PC-3 (cell line): ENCODE measurements at regions of chr13 and their contacts with region 1.

Region 1: DNA sequence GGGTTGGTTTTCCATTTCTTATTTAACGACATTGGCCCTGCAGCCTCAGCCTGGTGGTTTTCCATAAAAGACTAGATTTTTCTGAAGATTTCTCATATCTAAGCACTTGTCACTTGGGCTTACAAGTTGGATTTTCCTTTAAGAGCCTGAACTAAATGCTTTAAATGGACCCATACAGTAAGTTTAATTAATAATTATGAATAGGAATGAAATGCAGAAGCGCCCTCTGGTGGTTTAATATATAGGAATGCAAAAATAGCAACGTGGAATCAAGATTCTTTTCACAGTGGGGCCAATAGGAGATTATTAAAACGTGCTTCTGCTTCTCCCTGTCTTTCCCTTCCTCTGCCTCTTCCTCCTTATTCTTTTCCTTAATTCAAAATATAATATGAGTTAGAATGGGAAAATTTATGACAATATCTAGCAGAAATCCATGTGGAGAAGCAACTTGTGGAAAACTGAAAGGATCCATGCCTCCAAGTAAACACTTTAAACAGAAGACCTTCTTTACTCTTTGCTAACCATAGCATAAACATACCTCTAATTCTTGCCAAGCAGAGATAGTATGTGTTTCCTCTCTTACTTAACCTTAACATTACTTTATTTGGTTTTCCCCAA is 324.0 kb downstream of the GPC5 start:
- DNase-seq: peak; percentile 41
- ATAC-seq: no peak; the same call in 1 of the 2 replicates
- H3K4me3 ChIP-seq: no peak overlapping the region
- H3K27ac ChIP-seq: no peak overlapping the region
- H3K4me1 ChIP-seq: no peaks in the 10 kb centered on the region
- H3K27me3 ChIP-seq: no peaks in the 10 kb centered on the region
- CTCF ChIP-seq: peak; percentile 63

Region 2: GRCh38 chr13:91381371-91381770 is 341.0 kb before region 1 on chr13:
- CTCF ChIA-PET with region 1: no interaction called
- POLR2A ChIA-PET with region 1: no interaction called
- intact Hi-C with region 1: loop called (anchors 1 kb)
- DNase-seq: peak; percentile 26
- ATAC-seq: peak; percentile 31; the same call in 1 of the 2 replicates
- H3K4me3 ChIP-seq: no peak overlapping the region
- H3K27ac ChIP-seq: no peak overlapping the region
- H3K4me1 ChIP-seq: no peaks in the 10 kb centered on the region
- H3K27me3 ChIP-seq: no peaks in the 10 kb centered on the region
- CTCF ChIP-seq: peak; percentile 48; the same call in 1 of the 2 replicates

Region 3: GRCh38 chr13:91491984-91492383 is 230.4 kb before region 1 on chr13:
- CTCF ChIA-PET with region 1: no interaction called
- POLR2A ChIA-PET with region 1: no interaction called
- intact Hi-C with region 1: loop called (anchors 5 kb)
- DNase-seq: no peak
- ATAC-seq: no peak
- H3K4me3 ChIP-seq: no peak overlapping the region
- H3K27ac ChIP-seq: no peak overlapping the region
- H3K4me1 ChIP-seq: no peaks in the 10 kb centered on the region
- H3K27me3 ChIP-seq: no peaks in the 10 kb centered on the region
- CTCF ChIP-seq: no peak

Region 4: DNA sequence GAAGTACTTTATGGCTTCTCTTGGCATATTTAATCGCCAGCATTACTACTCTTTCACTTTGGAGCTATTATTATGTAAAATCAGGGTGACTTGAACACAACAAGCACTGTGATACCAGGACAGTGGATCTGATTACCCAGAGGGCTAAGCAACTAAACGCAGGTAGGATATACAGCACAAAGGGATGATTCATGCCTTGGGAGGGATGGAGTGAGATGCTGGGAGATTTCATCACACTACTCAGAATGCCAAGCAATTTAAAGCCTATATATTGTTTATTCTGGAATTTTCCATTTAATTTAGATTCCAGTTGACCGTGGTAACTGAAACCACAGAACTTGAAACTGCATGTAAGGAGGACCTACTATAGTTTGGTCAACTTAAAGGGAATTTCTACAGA is 70.0 kb before region 1 on chr13:
- CTCF ChIA-PET with region 1: no interaction called
- POLR2A ChIA-PET with region 1: no interaction called
- intact Hi-C with region 1: no loop called
- DNase-seq: no peak
- ATAC-seq: no peak
- H3K4me3 ChIP-seq: no peak overlapping the region
- H3K27ac ChIP-seq: no peak overlapping the region
- H3K4me1 ChIP-seq: no peaks in the 10 kb centered on the region
- H3K27me3 ChIP-seq: no peaks in the 10 kb centered on the region
- CTCF ChIP-seq: no peak